Pancreas (tissue), 10 donors: ENCODE measurements at regions of chr1 and their contacts with region 1.

Region 1: DNA sequence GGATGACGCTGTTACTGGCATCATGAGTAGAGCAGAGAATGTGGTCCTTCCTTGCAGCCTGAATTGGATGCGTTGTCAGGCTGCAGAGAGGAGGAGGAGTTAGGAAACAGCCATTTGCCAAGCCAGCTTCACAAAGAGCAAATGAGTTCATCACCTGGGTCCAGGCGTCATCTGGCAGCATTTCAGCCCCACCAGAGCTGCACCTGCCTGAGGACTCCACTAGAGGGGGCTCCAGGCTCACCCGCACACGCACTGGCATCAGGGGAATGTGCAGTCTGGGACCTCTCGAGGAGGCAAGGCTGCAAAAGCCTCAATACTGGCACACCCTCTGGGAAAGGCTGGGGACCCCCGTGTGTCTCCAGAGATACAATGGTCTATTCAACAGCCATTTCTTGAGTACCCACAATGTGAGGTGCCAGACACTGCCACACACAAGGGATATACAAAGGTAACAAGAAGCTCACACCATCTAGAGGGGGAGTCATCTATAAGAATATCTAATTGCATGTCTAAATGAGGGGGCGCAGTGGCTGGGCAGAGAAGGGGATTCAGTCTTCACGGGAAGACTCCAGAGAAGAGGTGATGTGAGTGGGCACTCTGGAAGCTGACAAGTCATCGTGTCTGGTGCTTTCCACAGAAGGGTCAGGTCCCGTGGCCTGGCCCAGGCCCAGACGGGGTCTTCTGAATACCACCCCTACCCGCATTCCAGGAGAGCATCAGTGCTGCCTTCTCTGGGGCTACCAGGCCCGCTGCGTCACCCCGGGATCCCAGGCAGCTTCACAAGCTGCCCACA is 53.5 kb upstream of the CNTN2 start:
- DNase-seq: peak; percentile 47 to 88 (median 80)
- ATAC-seq: peak; percentile 74 to 97 (median 92)
- H3K4me3 ChIP-seq: no peak overlapping the region
- H3K27ac ChIP-seq: no peak overlapping the region
- H3K4me1 ChIP-seq: no peaks in the 10 kb centered on the region
- H3K27me3 ChIP-seq: no peaks in the 10 kb centered on the region
- CTCF ChIP-seq: peak; percentile 86 to 91 (median 90)

Region 2: GRCh38 chr1:205020466-205020865 is 31.0 kb after region 1 on chr1:
- intact Hi-C with region 1: no loop called
- DNase-seq: no peak
- ATAC-seq: no peak
- H3K4me3 ChIP-seq: no peak overlapping the region
- H3K27ac ChIP-seq: no peak overlapping the region
- H3K4me1 ChIP-seq: no peaks in the 10 kb centered on the region
- H3K27me3 ChIP-seq: no peaks in the 10 kb centered on the region
- CTCF ChIP-seq: no peak

Region 3: DNA sequence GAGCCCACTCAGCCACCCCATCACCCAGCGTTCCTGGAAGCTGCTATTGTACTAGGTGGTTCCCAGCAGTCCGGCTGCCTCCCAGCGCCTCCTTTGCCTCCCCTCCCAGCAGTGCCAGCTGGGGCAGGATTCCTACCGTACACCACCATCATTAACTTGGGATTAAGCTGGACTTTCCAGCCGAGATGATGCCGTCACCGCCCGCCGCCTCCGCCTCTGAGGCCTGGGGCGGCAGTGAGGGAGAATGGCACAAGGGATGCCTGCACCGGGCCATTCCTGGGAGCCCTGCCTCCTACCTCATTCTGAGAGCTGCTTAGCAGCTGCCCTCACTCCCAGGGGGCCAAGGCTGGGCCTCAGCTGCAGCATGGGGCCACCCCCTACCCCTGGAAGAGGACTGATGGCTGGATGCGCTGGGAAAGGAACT is 66.7 kb after region 1 on chr1:
- intact Hi-C with region 1: loop called in 2 of 3 experiments (anchors 5 kb)
- DNase-seq: peak in 1 of 6 donors; percentile 32
- ATAC-seq: no peak
- H3K4me3 ChIP-seq: no peak overlapping the region
- H3K27ac ChIP-seq: no peak overlapping the region
- H3K4me1 ChIP-seq: no peaks in the 10 kb centered on the region
- H3K27me3 ChIP-seq: no peaks in the 10 kb centered on the region
- CTCF ChIP-seq: no peak

Region 4: DNA sequence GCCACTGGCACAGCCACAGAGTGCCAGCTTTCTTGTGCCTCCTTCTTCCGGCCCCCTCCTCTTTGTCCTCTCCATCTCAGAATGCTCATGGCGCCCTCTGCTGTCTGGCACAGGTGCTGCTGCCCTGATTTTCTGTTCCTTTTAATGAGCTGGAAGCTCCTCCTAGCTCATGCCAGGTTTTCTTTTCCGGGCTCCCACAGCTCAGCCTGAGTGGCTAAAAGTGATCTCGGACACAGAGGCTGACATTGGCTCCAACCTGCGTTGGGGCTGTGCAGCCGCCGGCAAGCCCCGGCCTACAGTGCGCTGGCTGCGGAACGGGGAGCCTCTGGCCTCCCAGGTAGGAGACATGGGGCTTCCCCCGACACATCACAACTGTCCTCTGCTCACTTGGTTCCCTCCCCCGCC is 72.2 kb after region 1 on chr1:
- intact Hi-C with region 1: loop called in 2 of 3 experiments (anchors 5 kb)
- DNase-seq: peak; percentile 56 to 87 (median 80)
- ATAC-seq: peak; percentile 75 to 95 (median 90)
- H3K4me3 ChIP-seq: no peak overlapping the region
- H3K27ac ChIP-seq: no peak overlapping the region
- H3K4me1 ChIP-seq: no peaks in the 10 kb centered on the region
- H3K27me3 ChIP-seq: no peaks in the 10 kb centered on the region
- CTCF ChIP-seq: peak; percentile 64 to 79 (median 74)

Region 5: DNA sequence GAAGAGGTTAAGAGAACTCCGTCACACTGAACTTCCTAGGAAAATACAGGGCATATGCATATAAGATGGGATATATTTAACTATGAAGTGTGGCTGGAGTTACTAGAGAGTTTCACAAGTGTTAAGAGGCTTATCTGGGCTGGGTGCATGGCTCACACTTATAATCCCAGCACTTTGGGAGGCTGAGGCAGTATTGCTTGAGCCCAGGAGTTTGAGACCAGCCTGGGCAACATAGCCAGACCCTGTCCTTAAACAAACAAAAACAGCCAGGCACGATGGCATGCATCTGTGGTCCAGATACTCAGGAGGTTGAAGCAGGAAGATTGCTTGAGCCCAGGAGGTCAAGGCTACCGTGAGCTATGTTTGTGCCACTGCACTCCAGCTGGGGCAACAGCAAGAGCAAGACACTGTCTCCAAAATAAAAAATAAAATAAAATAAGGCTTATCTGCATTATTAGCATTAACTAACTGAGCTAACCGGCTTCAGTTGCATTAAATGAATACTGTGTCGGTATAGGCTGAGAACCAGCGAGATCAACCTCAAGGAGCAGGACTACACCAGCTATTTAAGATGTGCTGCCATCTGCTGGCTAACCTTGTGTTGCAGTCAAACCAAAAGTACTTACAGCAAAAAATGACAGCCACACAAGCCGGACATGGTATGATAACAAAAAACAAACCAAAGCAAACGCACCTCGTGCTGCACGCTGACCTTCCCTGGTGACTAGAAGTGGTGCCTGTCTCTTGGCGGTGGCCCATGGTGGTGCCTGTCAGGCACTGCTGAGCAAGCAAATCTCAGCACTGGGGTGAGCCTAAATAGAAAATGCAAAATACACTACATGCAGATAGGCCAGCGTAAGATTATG is 152.0 kb after region 1 on chr1:
- intact Hi-C with region 1: loop called in 1 of 3 experiments (anchors 10 kb)
- DNase-seq: peak; percentile 53 to 77 (median 67)
- ATAC-seq: peak; percentile 82 to 94 (median 92)
- H3K4me3 ChIP-seq: peak overlapping the region in 1 of 4 donors; percentile 8
- H3K27ac ChIP-seq: peak overlapping the region in 1 of 4 donors; percentile 5
- H3K4me1 ChIP-seq: peaks cover 0 to 12% (median 0%) of the 10 kb centered on the region in 3 donors
- H3K27me3 ChIP-seq: no peaks in the 10 kb centered on the region
- CTCF ChIP-seq: peak; percentile 54 to 77 (median 72)

Region 6: GRCh38 chr1:205255941-205256780 is 266.7 kb after region 1 on chr1:
- intact Hi-C with region 1: loop called in 1 of 3 experiments (anchors 5 kb)
- DNase-seq: peak; percentile 86 to 96 (median 94)
- ATAC-seq: peak; percentile 98 to 100 (median 98)
- H3K4me3 ChIP-seq: no peak overlapping the region
- H3K27ac ChIP-seq: no peak overlapping the region
- H3K4me1 ChIP-seq: no peaks in the 10 kb centered on the region
- H3K27me3 ChIP-seq: no peaks in the 10 kb centered on the region
- CTCF ChIP-seq: peak; percentile 86 to 95 (median 92)